GM23248 (cell line): ENCODE measurements at regions of chr13 and their contacts with region 1.

Region 1: DNA sequence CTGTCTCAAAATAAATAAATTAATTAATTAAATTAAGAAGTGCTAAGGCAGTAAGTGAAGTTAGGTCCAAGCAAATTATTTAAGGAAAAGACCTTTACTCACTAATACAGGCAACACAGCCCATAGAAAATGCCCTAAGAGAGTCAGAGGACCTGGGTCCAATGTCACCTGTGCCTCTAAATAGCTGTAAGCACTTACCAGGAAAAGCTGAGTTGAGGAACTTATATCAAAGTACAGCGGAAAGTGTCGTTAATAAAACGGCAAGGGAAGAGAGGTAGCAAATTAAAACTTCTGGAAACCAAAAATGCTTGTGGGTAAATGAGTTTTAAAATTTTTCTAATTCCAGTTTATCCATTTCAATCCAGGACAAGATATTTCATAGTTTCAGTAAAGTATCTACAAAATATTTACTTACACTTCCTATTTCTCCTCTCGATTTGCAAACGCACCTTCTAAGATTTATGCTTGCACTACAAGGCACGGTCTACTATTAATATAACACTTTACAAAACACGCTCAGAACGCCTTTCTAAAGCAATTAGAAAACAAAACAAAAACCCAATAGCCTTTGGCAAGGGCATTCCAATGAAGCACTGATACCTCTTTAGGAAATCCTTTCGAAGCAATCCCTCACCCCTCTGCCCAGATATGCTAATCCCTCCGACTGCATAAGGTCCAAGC is 963 bp downstream of the VPS36 start:
- DNase-seq: no peak
- H3K4me3 ChIP-seq: peak overlapping the region; percentile 99
- H3K27ac ChIP-seq: peak overlapping the region; percentile 86
- H3K4me1 ChIP-seq: peaks cover 19% of the 10 kb centered on the region
- H3K27me3 ChIP-seq: no peaks in the 10 kb centered on the region

Region 2: DNA sequence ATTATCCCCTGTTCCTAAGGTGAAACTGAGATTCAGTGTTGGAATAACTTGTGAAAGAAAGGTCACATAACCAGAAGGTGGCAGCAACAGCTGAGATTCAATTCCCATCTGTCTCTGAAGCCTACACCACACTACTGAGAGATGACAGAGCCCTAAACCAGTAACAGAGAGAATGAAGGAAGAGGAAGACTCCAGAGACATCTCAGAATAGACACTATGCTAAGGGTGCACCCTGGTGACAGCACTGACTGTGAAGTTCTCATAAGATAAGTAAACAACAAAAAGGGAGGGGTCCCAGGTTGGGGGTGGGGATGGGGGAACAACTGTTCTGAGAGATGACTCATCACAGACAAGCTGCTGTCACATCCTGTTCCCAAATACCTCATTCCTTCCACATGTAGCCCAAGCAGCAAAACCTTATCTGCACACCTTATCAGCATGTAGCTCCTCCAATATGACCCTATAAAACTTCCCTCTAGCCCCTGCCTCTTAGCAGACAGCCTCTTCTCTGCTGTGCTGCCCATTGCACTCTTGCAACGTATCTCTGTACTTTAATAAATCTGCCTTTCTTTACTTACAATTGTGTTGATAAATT is 378.4 kb before region 1 on chr13:
- in situ Hi-C with region 1: no loop called
- DNase-seq: peak; percentile 53
- H3K4me3 ChIP-seq: no peak overlapping the region
- H3K27ac ChIP-seq: no peak overlapping the region
- H3K4me1 ChIP-seq: no peaks in the 10 kb centered on the region; the same call in 1 of the 2 replicates
- H3K27me3 ChIP-seq: no peaks in the 10 kb centered on the region; the same call in none of the 2 replicates

Region 3: GRCh38 chr13:52348983-52349780 is 100.3 kb before region 1 on chr13:
- in situ Hi-C with region 1: loop called (anchors 10 kb)
- DNase-seq: peak; percentile 92
- H3K4me3 ChIP-seq: 0 out of 2 replicates have a peak overlapping the region, but pooled peaks have one; percentile 31
- H3K27ac ChIP-seq: peak overlapping the region; percentile 90
- H3K4me1 ChIP-seq: peaks cover 63% of the 10 kb centered on the region
- H3K27me3 ChIP-seq: no peaks in the 10 kb centered on the region

Region 4: GRCh38 chr13:52673465-52673864 is 224.0 kb after region 1 on chr13:
- in situ Hi-C with region 1: no loop called
- DNase-seq: no peak
- H3K4me3 ChIP-seq: no peak overlapping the region
- H3K27ac ChIP-seq: no peak overlapping the region
- H3K4me1 ChIP-seq: no peaks in the 10 kb centered on the region
- H3K27me3 ChIP-seq: no peaks in the 10 kb centered on the region